Mammary epithelial cell (primary cell): ENCODE measurements at regions of chr15 and their contacts with region 1.

Region 1: GRCh38 chr15:58070801-58071418 is 5.4 kb upstream of the ALDH1A2 start:
- DNase-seq: peak; percentile 37
- H3K4me3 ChIP-seq: no peak overlapping the region
- H3K27ac ChIP-seq: no peak overlapping the region
- H3K4me1 ChIP-seq: peaks cover 3% of the 10 kb centered on the region
- H3K27me3 ChIP-seq: peaks cover 1% of the 10 kb centered on the region
- CTCF ChIP-seq: peak; percentile 95 to 99

Region 2: DNA sequence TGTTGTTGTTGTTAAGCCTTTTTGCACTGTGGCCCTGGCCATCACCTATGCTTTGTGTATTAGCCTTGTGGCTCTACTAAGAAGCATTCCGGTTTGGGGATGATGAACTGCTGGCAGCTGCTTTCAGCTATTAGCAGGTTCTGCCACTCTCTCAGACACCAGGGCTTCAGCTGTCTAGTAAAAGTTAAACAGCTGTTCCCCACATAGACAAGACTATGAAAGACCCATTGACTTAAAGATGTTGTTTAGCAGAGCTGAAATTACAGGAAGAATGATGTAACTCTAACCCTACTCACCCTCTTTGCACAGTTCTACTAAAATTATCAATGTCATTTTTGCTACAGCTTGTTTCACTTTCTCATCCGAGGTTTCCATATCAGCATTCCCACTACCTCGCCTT is 825.8 kb before region 1 on chr15:
- CTCF ChIA-PET with region 1: no interaction called
- dilution Hi-C with region 1: no loop called
- in situ Hi-C with region 1: no loop called
- intact Hi-C with region 1: no loop called
- DNase-seq: no peak
- H3K4me3 ChIP-seq: no peak overlapping the region
- H3K27ac ChIP-seq: no peak overlapping the region
- H3K4me1 ChIP-seq: no peaks in the 10 kb centered on the region
- H3K27me3 ChIP-seq: no peaks in the 10 kb centered on the region
- CTCF ChIP-seq: no peak

Region 3: DNA sequence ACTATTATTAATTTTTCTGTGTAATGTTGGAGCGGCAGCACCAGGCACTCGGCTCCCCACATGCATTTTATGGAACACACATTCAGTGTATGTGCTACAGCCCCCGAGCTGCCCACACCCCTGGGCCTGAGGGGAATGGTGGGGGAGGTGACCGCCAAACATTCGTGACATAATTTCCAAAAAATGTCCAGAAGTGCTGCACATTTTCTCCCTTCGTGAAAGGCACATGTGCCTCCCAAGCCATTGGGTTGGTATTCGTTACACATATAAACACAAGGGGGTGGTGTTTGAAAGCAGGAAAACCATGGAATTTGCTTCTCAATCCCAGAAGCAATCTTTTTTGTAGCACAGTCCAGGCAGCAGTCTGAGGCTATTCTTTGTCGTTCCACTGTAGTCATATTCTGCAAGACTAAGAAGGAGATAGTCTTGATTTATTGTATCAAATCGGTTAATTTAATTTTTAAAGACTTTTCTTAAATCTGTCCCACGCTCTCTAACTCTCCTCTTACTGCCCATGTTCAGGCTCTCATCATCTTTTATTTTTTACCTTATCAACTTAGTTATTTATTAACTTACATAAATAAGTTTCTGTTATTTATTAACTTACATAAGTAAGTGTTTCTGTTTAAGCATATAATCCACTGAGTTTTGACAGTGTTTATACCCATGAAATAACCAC is 403.6 kb before region 1 on chr15:
- CTCF ChIA-PET with region 1: no interaction called
- dilution Hi-C with region 1: no loop called
- in situ Hi-C with region 1: no loop called
- intact Hi-C with region 1: loop called (anchors 2 kb)
- DNase-seq: peak; percentile 50
- H3K4me3 ChIP-seq: no peak overlapping the region
- H3K27ac ChIP-seq: peak overlapping the region; percentile 6
- H3K4me1 ChIP-seq: peaks cover 18% of the 10 kb centered on the region
- H3K27me3 ChIP-seq: no peaks in the 10 kb centered on the region
- CTCF ChIP-seq: peak; percentile 47 to 64

Region 4: DNA sequence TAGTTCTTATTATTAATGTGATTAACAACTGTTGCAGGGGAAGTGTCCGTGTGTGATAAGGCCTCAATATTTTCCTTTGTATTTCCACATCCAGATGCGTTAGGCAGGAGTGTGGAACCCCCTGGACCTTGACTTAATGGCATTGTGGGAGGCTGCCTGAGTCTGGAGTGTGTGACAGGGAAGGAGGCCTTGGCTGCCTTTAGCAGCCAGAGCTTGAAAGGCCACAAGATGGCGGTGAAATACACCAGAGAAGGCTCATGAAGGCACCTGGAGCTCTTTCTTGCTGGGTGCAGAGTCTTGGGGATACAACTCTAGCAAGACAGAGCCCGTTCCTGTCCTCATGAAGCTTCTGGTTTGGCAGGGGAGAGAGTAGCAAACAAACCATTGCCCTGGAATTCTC is 327.5 kb before region 1 on chr15:
- CTCF ChIA-PET with region 1: interaction called, 7 read pairs
- dilution Hi-C with region 1: no loop called
- in situ Hi-C with region 1: loop called in 1 of 2 experiments (anchors 10 kb)
- intact Hi-C with region 1: no loop called
- DNase-seq: no peak
- H3K4me3 ChIP-seq: no peak overlapping the region
- H3K27ac ChIP-seq: no peak overlapping the region
- H3K4me1 ChIP-seq: no peaks in the 10 kb centered on the region
- H3K27me3 ChIP-seq: no peaks in the 10 kb centered on the region
- CTCF ChIP-seq: peak; percentile 9 to 33

Region 5: GRCh38 chr15:57751177-57751800 is 319.6 kb before region 1 on chr15:
- CTCF ChIA-PET with region 1: interaction called, 15 read pairs
- dilution Hi-C with region 1: no loop called
- in situ Hi-C with region 1: loop called (anchors 5 to 10 kb)
- intact Hi-C with region 1: loop called (anchors 1 kb)
- DNase-seq: peak; percentile 34
- H3K4me3 ChIP-seq: no peak overlapping the region
- H3K27ac ChIP-seq: no peak overlapping the region
- H3K4me1 ChIP-seq: no peaks in the 10 kb centered on the region
- H3K27me3 ChIP-seq: no peaks in the 10 kb centered on the region
- CTCF ChIP-seq: peak; percentile 67 to 86

Region 6: GRCh38 chr15:57861036-57861638 is 209.8 kb before region 1 on chr15:
- CTCF ChIA-PET with region 1: interaction called, 4 read pairs
- dilution Hi-C with region 1: loop called (anchors 5 kb)
- in situ Hi-C with region 1: loop called (anchors 5 kb)
- intact Hi-C with region 1: loop called (anchors 1 kb)
- DNase-seq: peak; percentile 61
- H3K4me3 ChIP-seq: no peak overlapping the region
- H3K27ac ChIP-seq: no peak overlapping the region
- H3K4me1 ChIP-seq: peaks cover 8% of the 10 kb centered on the region
- H3K27me3 ChIP-seq: no peaks in the 10 kb centered on the region
- CTCF ChIP-seq: peak; percentile 66 to 75

Region 7: DNA sequence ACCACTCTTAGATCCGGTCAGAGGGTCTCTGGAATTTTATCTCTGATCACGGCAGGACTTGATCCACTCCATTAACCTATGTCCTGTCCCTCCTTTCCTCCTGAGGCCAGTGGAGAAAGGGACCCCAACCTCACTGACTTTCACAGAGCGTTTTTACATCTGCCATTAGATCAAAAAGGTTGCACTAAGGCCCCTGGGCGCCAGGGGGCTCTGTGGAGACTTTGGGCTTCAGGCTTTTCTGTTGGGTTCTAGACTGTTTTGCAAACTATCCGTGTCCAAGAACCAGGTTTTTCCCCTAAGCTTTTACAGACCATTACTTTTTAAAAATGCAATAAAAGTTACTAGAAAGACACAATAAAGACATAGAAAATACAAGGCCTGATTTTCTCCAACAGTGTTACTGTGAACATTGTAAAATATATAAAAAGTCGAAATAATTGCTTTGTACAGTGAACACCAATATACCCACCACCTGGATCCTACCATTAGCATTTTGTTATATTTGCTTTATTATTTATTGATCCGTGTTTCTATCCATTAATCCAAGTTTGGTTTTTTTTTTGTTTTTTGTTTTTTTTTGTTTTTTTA is 204.7 kb before region 1 on chr15:
- CTCF ChIA-PET with region 1: interaction called, 4 read pairs
- dilution Hi-C with region 1: loop called (anchors 5 kb)
- in situ Hi-C with region 1: loop called (anchors 5 kb)
- intact Hi-C with region 1: loop called (anchors 1 kb)
- DNase-seq: peak; percentile 36
- H3K4me3 ChIP-seq: no peak overlapping the region
- H3K27ac ChIP-seq: no peak overlapping the region
- H3K4me1 ChIP-seq: no peaks in the 10 kb centered on the region
- H3K27me3 ChIP-seq: no peaks in the 10 kb centered on the region
- CTCF ChIP-seq: peak; percentile 92 to 93

Region 8: GRCh38 chr15:57969354-57969753 is 101.6 kb before region 1 on chr15:
- CTCF ChIA-PET with region 1: interaction called, 5 read pairs
- dilution Hi-C with region 1: no loop called
- in situ Hi-C with region 1: loop called (anchors 10 kb)
- intact Hi-C with region 1: loop called (anchors 1 kb)
- DNase-seq: peak; percentile 11
- H3K4me3 ChIP-seq: no peak overlapping the region
- H3K27ac ChIP-seq: no peak overlapping the region
- H3K4me1 ChIP-seq: no peaks in the 10 kb centered on the region
- H3K27me3 ChIP-seq: no peaks in the 10 kb centered on the region
- CTCF ChIP-seq: peak; percentile 43 to 56

Region 9: DNA sequence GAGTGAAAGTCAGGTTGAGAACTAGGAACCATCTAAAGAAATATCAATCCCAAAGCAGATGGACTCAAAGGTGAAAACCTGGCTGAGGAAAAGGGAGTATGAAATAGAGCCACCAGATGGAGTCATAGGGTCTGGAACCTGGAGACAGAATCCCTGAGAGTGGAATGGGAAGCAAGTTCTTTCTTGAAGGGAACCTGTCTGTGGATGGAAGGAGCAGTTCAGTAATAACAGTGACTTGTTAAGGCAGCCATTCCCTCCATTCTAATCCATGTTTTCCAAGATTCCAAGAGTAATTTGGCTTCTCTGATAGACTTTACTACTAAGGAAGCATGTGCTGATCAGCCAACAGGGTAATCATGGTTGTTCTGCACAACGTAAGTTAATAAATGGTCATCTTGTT is 44.8 kb after region 1 on chr15:
- CTCF ChIA-PET with region 1: no interaction called
- dilution Hi-C with region 1: no loop called
- in situ Hi-C with region 1: no loop called
- intact Hi-C with region 1: no loop called
- DNase-seq: peak; percentile 56
- H3K4me3 ChIP-seq: no peak overlapping the region
- H3K27ac ChIP-seq: no peak overlapping the region
- H3K4me1 ChIP-seq: no peaks in the 10 kb centered on the region
- H3K27me3 ChIP-seq: no peaks in the 10 kb centered on the region
- CTCF ChIP-seq: peak; percentile 37 to 59

Region 10: DNA sequence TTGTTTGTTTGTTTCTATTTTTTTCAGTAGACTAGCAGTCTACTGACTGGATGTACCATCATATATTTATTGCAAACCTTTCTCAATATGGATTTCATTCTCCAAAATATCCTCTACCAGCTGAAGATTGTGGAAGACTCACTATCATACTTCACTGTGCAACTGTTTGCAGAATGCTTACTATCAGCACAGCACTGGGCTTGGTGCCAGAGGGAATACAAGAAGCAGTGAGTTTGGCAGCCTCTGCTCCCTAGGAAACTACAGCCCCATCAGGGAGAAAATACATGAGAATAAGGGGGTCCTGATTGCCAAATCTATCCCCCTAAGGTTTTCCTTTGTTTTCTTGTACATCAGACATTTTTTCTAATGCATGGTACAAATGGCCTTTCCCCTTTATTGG is 94.8 kb after region 1 on chr15:
- CTCF ChIA-PET with region 1: no interaction called
- dilution Hi-C with region 1: no loop called
- in situ Hi-C with region 1: no loop called
- intact Hi-C with region 1: no loop called
- DNase-seq: no peak
- H3K4me3 ChIP-seq: no peak overlapping the region
- H3K27ac ChIP-seq: no peak overlapping the region
- H3K4me1 ChIP-seq: no peaks in the 10 kb centered on the region
- H3K27me3 ChIP-seq: no peaks in the 10 kb centered on the region
- CTCF ChIP-seq: no peak